Activated CD4-positive, alpha-beta memory T cell treated with anti-CD3 and anti-CD28 coated beads for 36 hours (primary cell): ENCODE measurements at regions of chr20 and their contacts with region 1.

Region 1: DNA sequence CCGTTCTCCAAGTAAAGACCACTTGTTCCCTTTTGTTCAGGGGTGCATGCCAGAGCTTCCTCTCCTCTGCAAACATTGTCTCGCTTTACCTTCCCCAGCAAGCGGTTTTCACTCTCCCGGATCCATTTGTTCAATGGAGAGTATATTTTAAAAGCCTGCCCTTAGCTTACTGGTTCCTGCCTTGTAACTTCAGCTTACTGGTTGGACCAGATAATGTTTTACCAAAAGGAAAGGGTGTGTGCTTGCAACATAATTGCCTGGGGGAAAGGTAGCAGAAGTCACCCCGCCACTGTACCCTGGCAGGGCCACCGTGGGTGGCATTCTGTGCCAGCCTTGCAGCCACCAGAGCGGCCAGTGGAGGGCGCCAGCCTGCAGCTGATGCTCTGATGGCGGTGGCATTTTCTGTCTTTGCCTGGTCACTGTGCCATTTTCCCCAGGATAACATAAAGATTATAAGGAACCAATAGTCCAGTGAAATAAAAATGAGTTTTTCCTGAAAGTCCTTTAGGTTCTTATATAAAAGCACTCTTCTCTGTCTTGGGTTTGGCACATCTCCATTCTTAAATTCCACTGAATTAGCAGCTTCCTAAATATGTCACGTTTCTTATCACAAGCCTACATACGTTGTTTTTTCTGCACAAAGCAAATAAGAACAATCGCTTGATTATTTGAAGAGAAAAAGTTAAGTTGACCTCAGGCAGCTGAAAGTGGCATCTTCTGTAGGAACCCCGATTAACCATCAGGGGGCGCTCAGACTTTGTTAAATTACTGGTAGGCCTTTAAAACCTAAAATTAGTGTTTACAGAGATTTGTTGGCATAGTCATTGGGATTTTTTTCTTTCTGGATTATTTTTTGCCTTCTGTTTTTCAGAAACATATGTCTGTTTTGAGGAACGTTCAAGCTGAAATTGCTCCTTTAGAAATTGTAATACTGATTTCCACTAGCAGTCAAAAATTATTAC is 67.4 kb upstream of the XRN2 start:
- DNase-seq: peak; percentile 75
- H3K4me3 Mint-ChIP-seq: no peak overlapping the region
- H3K27ac Mint-ChIP-seq: no peak overlapping the region
- H3K4me1 Mint-ChIP-seq: peaks cover 3% of the 10 kb centered on the region
- H3K27me3 Mint-ChIP-seq: no peaks in the 10 kb centered on the region

Region 2: DNA sequence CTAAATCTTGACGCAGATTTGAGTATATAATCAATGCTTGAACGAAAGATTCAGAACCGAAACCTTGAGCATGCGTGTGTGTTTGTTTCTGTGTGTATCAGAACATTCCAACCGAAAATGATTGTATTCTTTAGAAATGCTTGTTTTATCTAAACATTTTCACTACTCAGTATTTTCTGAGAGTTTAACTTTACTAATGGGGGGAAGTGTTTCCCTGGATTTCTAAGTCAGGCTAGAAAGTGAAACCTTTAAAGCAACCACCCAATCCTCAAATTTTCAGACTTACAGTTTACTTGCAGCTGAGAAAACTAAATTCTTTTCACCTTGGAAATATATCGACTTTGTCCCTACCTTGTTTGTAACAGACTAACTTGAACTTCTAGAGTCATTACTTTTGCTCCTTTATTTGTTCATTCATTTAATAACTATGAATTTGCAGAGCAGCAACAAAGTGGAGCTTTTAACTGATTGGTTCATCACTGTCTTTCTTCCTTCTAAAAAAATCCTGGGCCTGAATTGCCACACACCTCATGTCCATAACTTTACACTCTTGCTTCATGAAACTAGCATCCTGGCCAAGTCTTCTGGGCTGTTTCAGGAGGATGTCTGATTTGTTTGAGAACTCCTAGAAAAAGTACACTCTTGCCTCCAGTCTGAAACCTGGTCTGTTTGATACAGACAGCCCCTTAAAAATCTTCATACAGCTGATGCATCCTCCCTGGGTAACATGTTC is 10.4 kb before region 1 on chr20:
- CTCF ChIA-PET with region 1: interaction called, 12 read pairs
- POLR2A ChIA-PET with region 1: no interaction called
- intact Hi-C with region 1: no loop called
- DNase-seq: no peak
- H3K4me3 Mint-ChIP-seq: no peak overlapping the region
- H3K27ac Mint-ChIP-seq: no peak overlapping the region
- H3K4me1 Mint-ChIP-seq: no peaks in the 10 kb centered on the region
- H3K27me3 Mint-ChIP-seq: no peaks in the 10 kb centered on the region

Region 3: DNA sequence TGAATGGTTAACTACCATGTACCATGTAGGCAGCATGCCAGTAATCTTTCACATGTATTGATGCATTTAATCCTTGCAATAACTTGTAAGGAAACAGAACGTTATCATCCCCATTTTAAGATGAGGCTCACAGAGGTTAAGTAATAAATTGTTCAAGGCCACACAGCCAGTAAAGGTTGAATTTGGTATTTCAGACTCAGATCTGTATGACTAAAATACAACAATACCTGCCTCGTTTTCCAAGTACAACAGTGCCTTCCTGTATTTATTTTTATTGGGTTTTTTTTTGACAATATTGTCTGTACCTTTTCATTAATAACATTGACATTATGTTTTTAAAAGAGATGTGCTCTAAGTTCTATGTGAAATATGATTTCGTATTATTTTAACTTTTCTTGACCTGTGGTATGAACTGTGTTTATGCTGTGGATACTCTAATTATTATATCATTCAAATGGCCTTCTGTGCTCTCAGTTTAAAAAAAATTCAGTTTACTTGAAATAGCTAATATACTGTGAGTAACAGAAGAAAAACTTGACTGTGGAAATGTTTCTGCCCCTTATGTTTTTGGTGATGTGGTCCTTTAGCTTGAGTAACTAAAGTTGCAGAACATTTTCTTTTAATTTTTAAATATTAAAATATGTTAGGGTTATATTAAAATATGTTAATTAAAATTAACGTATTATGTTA is 107.0 kb after region 1 on chr20:
- CTCF ChIA-PET with region 1: interaction called, 19 read pairs
- POLR2A ChIA-PET with region 1: no interaction called
- intact Hi-C with region 1: no loop called
- DNase-seq: no peak
- H3K4me3 Mint-ChIP-seq: no peak overlapping the region
- H3K27ac Mint-ChIP-seq: no peak overlapping the region
- H3K4me1 Mint-ChIP-seq: no peaks in the 10 kb centered on the region
- H3K27me3 Mint-ChIP-seq: no peaks in the 10 kb centered on the region

Region 4: DNA sequence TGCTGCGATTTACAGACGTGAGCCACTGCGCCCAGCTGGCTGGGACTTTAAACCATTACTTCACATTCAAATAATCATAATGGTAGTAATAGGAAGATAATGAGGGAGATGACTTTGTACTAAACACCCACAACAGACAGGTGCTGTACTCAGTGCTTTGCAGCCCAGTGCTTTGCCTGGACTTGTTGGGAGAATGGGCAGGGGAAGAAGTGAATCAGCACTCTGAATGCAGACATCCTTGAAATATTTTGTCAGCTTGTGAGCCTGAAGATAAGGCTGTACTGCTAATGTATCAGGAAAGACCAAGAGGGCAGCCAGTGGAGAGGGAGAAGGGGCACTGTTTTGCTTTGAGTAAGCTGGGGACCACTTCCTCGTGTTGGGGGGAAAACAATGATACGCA is 260.7 kb after region 1 on chr20:
- CTCF ChIA-PET with region 1: interaction called, 319 read pairs
- POLR2A ChIA-PET with region 1: no interaction called
- intact Hi-C with region 1: no loop called
- DNase-seq: no peak
- H3K4me3 Mint-ChIP-seq: no peak overlapping the region
- H3K27ac Mint-ChIP-seq: no peak overlapping the region
- H3K4me1 Mint-ChIP-seq: no peaks in the 10 kb centered on the region
- H3K27me3 Mint-ChIP-seq: peaks cover 27% of the 10 kb centered on the region

Region 5: DNA sequence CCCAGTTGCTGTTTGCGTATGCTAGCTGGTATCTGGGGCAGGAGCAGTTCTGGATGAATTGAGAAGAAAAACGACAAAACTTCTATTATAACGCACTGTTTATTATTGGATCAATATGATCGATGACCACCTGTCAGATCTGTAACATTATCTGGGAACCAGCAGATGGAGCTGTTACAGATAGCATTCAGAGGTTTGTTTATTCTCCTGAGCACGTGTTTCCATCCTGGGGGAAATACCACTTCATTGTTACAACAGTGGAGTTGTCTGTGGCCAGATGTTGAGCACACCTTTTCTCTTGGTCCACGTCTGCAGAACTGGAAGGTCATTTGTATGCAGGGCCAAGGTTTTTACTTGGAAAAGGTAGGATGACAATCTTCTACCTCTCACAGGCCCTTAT is 294.1 kb after region 1 on chr20:
- CTCF ChIA-PET with region 1: interaction called, 14 read pairs
- POLR2A ChIA-PET with region 1: no interaction called
- intact Hi-C with region 1: no loop called
- DNase-seq: no peak
- H3K4me3 Mint-ChIP-seq: no peak overlapping the region
- H3K27ac Mint-ChIP-seq: no peak overlapping the region
- H3K4me1 Mint-ChIP-seq: peaks cover 6% of the 10 kb centered on the region
- H3K27me3 Mint-ChIP-seq: peaks cover 30% of the 10 kb centered on the region